Dorsolateral prefrontal cortex (tissue), 120 donors: ENCODE measurements at regions of chr9 and their contacts with region 1.

Region 1: GRCh38 chr9:128127990-128128835 is 684 bp upstream of the PTGES2 start:
- DNase-seq: peak; percentile 69 to 88 (median 84)
- H3K4me3 ChIP-seq: peak overlapping the region; percentile 73 to 99 (median 93)
- H3K27ac ChIP-seq: peak overlapping the region; percentile 93 to 100 (median 98)
- H3K27me3 ChIP-seq: no peaks in the 10 kb centered on the region
- CTCF ChIP-seq: peak in 29 of 56 donors; percentile 5 to 59 (median 23)

Region 2: DNA sequence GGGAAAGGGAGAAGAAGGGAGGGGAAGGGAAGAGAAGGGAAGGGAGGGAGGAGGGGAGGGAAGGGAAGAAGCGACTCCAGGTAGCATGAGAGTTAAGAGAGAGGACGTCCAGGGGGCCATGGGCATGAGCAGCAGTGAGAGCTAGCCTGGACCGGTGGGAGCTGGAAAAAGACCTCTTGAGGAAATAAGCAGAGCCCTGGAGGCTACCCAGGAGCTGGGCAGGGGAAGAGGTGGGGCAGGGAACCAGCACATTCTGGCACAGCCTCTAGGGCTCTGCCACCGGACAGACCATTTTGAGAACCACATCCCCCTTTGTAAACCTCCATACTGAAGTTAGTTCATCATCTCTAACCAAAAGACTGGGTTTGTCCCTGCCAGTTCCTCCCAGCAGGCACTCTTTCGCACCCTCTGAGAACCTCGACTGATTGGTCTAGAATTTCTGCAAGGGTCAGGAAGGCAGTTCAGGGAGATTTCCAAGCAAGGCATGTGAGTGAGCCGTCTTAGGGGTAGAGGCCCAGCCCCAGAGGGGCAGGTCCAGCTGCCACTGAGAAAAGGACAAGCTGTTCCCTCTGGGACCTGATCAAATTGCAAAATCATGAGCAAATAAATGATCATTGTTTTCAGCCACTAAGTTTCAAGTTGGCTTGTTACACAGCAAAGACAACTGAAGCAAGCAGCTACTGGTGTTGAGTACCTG is 72.7 kb before region 1 on chr9:
- intact Hi-C with region 1: no loop called
- DNase-seq: peak in 2 of 10 donors; percentile 24 to 31
- H3K4me3 ChIP-seq: no peak overlapping the region
- H3K27ac ChIP-seq: peak overlapping the region in 54 of 59 donors; percentile 8 to 91 (median 70)
- H3K27me3 ChIP-seq: no peaks in the 10 kb centered on the region
- CTCF ChIP-seq: no peak

Region 3: GRCh38 chr9:128067876-128068613 is 60.2 kb before region 1 on chr9 and contains the start of gene SLC25A25:
- intact Hi-C with region 1: loop called in 1 of 2 experiments (anchors 5 kb)
- DNase-seq: peak; percentile 99 to 100 (median 100)
- H3K4me3 ChIP-seq: peak within 1 kb of the TSS; percentile 64 to 97 (median 90)
- H3K27ac ChIP-seq: peak within 1 kb of the TSS; percentile 68 to 100 (median 98)
- H3K27me3 ChIP-seq: no peaks in the 10 kb centered on the region
- CTCF ChIP-seq: peak in 11 of 56 donors; percentile 6 to 38 (median 18)
- total RNA-seq, gene SLC25A25: 17.8 to 66.6 (median 35.3) TPM

Region 4: DNA sequence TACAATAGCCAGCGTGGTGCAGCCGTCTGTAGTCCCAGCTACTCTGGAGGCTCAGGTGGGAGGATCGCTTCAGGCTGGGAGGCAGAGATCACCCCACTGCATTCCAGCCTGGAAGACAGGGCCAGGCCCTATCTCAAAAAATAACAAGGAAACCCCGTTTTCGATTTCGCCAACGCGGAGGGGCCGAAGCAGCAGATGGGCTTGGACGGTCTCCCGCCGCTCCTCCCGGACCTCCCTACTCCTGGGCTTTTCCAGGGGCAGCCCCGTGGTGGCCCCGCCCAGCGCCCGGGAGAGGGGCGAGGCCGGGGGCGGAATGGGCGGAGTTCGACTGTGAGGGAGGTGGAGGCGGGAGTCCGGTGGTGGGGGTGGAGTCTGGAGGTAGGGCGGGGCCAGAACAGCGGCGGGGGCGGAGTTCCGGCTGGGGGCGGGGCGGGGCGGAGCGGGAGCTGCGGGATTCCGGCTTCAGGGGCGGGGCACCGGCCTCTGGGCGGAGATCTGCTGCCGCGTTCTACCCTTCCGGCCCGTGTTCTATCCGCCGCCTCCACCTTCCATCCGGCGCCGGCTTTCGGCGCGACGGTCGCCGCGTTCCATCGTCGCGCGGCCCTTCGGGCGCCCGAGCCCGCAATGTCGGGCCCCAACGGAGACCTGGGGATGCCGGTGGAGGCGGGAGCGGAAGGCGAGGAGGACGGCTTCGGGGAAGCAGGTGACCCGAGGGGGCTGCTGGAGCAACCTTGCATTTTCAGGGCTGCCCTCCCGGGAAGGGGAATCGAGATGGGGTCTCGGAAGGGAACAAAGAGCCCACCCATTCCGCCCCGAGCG is 31.8 kb after region 1 on chr9 and contains the start of gene BBLN:
- intact Hi-C with region 1: loop called in 1 of 2 experiments (anchors 5 kb)
- DNase-seq: peak; percentile 84 to 96 (median 92)
- H3K4me3 ChIP-seq: peak within 1 kb of the TSS; percentile 46 to 92 (median 82)
- H3K27ac ChIP-seq: peak within 1 kb of the TSS in 57 of 59 donors; percentile 6 to 90 (median 79)
- H3K27me3 ChIP-seq: no peaks in the 10 kb centered on the region
- CTCF ChIP-seq: peak in 10 of 56 donors; percentile 6 to 52 (median 22)
- total RNA-seq, gene BBLN: 56.9 to 208 (median 122) TPM

Region 5: DNA sequence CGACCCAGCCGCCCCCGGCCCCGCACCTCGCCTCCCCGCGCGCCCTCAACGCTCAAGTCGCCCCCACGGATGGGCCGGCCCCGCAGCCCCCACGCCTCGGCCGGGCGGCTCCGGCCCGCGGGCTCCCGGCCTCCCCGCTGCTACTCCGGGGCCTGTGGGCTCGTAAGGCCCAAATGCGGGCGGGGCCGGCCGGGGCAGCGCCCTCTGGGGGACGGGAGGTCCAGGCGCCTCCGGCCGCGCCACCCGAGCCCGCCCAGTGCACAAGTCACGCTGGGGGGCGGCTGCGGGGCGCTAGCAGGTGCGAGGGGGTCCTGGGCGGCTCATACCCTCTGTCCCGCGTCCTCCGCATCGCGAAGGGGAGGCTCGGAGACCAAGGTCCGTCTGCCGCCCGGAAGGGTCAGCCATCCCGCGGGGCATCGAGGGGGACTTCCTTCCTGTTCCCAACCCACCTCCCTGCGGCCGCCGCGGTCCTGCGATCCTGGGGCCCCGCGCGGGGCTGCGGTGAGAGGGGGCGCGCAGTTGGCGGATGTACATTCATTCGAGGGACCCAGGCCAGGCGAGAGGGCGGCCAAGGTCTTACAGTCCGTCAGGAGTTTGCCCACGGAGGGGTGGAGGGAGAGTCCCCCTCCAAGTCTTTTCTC is 63.3 kb after region 1 on chr9 and contains the start of gene CIZ1:
- intact Hi-C with region 1: loop called in 1 of 2 experiments (anchors 10 kb)
- DNase-seq: peak in 7 of 10 donors; percentile 66 to 86 (median 71)
- H3K4me3 ChIP-seq: peak within 1 kb of the TSS; percentile 47 to 95 (median 80)
- H3K27ac ChIP-seq: peak within 1 kb of the TSS; percentile 33 to 96 (median 89)
- H3K27me3 ChIP-seq: no peaks in the 10 kb centered on the region
- CTCF ChIP-seq: peak; percentile 35 to 92 (median 76)
- total RNA-seq, gene CIZ1: 120 to 216 (median 165) TPM